ENCODE measurements at regions of chr6 and their contacts with region 1.

Region 1: DNA sequence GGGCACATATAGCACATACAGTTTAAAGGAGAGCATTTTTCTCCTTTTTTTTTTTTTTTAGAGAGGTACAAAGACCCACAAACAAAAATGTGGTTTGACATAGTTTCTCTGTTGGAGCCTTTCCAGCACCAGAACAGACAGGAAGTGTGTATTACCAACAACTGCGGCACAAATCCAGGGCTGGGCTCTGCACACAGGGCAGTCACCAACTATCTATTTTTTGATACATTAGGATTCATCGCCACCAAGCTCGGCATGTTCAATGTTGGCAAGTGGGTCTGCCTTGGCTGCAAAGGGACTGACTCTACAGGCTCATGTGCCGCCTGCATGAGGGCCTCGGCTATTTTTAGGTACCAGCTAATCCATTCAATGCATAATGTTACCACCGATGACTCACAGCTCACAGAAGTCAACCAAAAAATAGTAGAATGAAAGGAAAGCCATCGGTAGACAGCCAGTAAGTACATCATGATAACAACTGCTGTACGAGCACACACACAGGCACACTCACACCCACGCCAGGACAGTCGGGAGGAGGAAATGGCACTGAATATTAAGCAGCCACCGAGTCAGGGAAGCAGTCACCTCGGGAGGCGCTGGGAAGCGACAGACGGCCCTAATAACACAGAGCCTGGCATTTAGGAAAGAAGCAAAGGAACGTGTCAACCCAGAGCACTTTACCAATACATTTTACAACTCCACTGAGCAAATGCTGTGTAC is 81.6 kb downstream of the GMPR start:
- DNase-seq: peak; percentile 65
- H3K4me3 Mint-ChIP-seq: peak overlapping the region; percentile 56
- H3K27ac Mint-ChIP-seq: peak overlapping the region; percentile 81
- H3K4me1 Mint-ChIP-seq: peaks cover 76% of the 10 kb centered on the region
- H3K27me3 Mint-ChIP-seq: no peaks in the 10 kb centered on the region

Region 2: DNA sequence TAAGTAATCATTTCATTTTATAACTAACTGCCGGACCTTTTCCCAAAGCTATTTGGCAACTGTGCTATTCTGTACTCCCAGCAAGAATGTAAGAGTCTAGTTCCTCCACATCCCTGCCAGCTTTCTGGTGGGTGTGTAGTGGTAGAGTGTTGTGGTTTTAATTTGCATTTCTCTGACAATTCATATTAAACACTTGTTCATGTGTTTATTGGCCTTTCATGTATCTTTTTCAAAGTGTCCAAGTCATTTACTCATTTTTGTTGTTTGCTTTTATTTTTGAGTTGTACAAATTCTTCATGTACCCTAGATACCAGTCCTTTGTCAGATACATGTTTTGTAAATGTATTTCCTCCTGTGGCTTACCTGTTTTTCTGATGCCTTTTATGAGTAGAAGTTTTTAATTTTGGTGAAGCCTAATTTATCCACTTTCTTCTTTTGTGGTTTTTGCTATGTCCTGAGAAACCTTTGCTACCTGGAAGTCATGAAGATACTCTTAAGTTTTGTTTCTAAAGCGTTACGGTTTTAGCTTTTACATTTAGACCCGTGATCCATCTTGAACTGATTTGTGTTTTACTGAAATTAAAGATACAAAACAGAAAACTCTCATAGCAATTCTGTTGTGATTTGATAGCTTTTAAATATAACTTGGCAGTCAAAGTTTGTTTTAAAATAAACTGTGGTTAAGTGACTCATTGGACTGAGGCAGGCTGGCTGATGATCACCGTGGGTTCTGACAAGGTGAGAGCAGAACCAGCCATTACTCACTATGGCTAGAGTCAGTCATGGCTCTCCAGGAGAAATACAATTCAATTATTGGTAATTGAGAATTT is 183.1 kb before region 1 on chr6:
- intact Hi-C with region 1: loop called (anchors 2 kb)
- DNase-seq: no peak
- H3K4me3 Mint-ChIP-seq: peak overlapping the region; percentile 73
- H3K27ac Mint-ChIP-seq: peak overlapping the region; percentile 95
- H3K4me1 Mint-ChIP-seq: peaks cover 78% of the 10 kb centered on the region
- H3K27me3 Mint-ChIP-seq: no peaks in the 10 kb centered on the region

Region 3: DNA sequence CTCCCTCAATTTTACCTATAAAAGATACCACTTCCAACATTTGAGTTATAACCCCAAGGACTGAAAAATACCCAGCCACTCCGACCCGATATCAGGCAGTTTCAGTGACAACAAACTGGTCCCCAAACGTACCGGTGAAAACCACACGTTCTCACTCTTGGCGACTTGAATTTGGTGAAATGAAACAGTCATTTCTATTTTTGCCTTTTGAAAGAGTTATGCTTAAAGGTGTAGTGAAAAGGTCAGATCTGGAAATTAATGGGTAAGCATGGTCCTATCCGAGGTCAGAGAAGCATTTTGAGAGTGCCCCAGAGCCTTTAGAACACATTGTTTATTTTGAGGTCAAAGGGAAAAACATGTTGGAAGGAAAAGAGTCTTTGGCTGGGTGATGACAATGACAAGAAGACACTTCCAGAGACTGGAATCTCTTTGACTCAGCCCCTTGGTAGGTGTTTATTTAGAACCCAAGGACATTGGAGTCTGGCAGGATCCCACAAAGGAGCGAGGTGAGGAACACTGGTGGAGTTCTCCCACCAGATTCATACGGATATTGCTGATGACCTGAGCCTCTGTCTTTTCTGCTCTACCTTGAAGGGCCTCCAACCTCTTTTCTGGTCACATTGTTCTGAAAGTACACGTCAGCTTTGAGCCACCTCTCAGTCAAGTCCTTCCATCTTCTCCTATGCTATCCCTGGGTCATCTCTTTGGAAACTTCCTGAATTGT is 153.4 kb after region 1 on chr6:
- intact Hi-C with region 1: loop called (anchors 2 kb)
- DNase-seq: peak; percentile 14
- H3K4me3 Mint-ChIP-seq: peak overlapping the region; percentile 66
- H3K27ac Mint-ChIP-seq: peak overlapping the region; percentile 93
- H3K4me1 Mint-ChIP-seq: peaks cover 82% of the 10 kb centered on the region
- H3K27me3 Mint-ChIP-seq: no peaks in the 10 kb centered on the region

Region 4: GRCh38 chr6:16684896-16685554 is 365.1 kb after region 1 on chr6:
- intact Hi-C with region 1: loop called (anchors 5 kb)
- DNase-seq: peak; percentile 71
- H3K4me3 Mint-ChIP-seq: peak overlapping the region; percentile 43
- H3K27ac Mint-ChIP-seq: peak overlapping the region; percentile 88
- H3K4me1 Mint-ChIP-seq: peaks cover 97% of the 10 kb centered on the region
- H3K27me3 Mint-ChIP-seq: no peaks in the 10 kb centered on the region

Region 5: DNA sequence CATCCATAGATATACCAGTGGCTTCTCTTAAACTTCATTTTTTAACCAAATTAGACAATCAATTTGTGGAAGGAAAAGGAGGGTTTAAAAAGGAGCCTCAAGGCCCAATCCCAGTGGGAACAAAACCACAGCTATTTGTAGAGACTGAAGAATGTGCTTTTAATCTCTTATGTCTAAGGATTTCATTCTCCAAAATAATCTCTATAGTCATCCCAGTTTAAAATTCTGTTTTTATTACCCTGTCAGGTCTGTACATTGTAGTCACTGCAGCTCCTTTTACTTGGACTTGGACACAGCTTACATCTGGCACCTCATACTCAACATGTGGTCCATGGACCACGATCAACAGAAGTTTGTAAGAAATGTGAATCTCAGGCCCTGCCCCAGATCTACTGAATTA is 629.7 kb after region 1 on chr6:
- intact Hi-C with region 1: loop called (anchors 2 kb)
- DNase-seq: no peak
- H3K4me3 Mint-ChIP-seq: no peak overlapping the region
- H3K27ac Mint-ChIP-seq: no peak overlapping the region
- H3K4me1 Mint-ChIP-seq: peaks cover 25% of the 10 kb centered on the region
- H3K27me3 Mint-ChIP-seq: peaks cover 16% of the 10 kb centered on the region

Measured in activated T-helper 1 cell treated with anti-CD3 and anti-CD28 coated beads, Interleukin-12 subunit alpha, Interleukin-12 subunit beta, Interleukin-2, Interleukin-4 antibody, amounts not matched to agents 30 ng/mL and 10 ng/mL and 1 ng/mL, durations not matched to agents 14 hours and 24 hours and 36 hours (primary cell).